CD14-positive monocyte (primary cell): ENCODE measurements at regions of chr2 and their contacts with region 1.

Region 1: DNA sequence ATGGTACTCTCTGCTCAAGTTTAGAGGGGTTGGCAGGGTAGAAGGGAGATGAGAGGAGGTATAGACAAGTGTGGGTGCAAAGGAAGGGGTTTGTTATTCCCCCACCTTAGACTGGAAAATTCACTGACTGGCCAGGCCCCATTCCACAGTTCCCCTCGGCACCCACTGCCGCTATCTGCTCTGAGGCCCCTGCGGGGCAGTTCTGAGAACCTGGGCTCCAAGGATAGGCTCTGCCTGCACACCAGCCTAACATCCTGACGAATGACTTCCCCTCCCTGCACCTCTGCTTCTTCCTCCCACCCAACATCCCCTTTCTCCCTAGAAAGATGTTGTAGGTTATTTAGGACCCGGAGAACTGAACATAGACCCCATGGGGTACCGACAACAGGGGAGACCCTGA is 303.9 kb upstream of the HDAC4 start:
- DNase-seq: no peak
- H3K4me3 ChIP-seq: no peak overlapping the region
- H3K4me3 Mint-ChIP-seq: no peak overlapping the region
- H3K27ac ChIP-seq: no peak overlapping the region
- H3K27ac Mint-ChIP-seq: no peak overlapping the region
- H3K4me1 ChIP-seq: no peaks in the 10 kb centered on the region
- H3K4me1 Mint-ChIP-seq: peaks cover 2% of the 10 kb centered on the region
- H3K27me3 ChIP-seq: peaks cover 0 to 2% of the 10 kb centered on the region in 2 donors
- H3K27me3 Mint-ChIP-seq: peaks cover 13 to 27% (median 15%) of the 10 kb centered on the region in 3 donors
- CTCF ChIP-seq: no peak

Region 2: GRCh38 chr2:239739206-239739605 is 34.5 kb after region 1 on chr2:
- intact Hi-C with region 1: loop called in 1 of 2 experiments (anchors 1 kb)
- DNase-seq: no peak
- H3K4me3 ChIP-seq: no peak overlapping the region
- H3K4me3 Mint-ChIP-seq: no peak overlapping the region
- H3K27ac ChIP-seq: no peak overlapping the region
- H3K27ac Mint-ChIP-seq: no peak overlapping the region
- H3K4me1 ChIP-seq: no peaks in the 10 kb centered on the region
- H3K4me1 Mint-ChIP-seq: no peaks in the 10 kb centered on the region
- H3K27me3 ChIP-seq: peaks cover 0 to 12% of the 10 kb centered on the region in 2 donors
- H3K27me3 Mint-ChIP-seq: peaks cover 4 to 7% (median 5%) of the 10 kb centered on the region in 3 donors
- CTCF ChIP-seq: no peak